ENCODE measurements at regions of chr3 and their contacts with region 1.

Region 1: GRCh38 chr3:35908366-35909232 is 269.3 kb downstream of the ARPP21 start:
- DNase-seq: peak; percentile 9
- ATAC-seq: peak; percentile 90
- H3K4me3 ChIP-seq: no peak overlapping the region
- H3K27ac ChIP-seq: no peak overlapping the region
- H3K4me1 ChIP-seq: no peaks in the 10 kb centered on the region
- H3K27me3 ChIP-seq: no peaks in the 10 kb centered on the region
- CTCF ChIP-seq: peak; percentile 58 to 67 (median 60)
- EP300 ChIP-seq: no peak
- POLR2A ChIP-seq: no peak
- RAD21 ChIP-seq: peak; percentile 69

Region 2: DNA sequence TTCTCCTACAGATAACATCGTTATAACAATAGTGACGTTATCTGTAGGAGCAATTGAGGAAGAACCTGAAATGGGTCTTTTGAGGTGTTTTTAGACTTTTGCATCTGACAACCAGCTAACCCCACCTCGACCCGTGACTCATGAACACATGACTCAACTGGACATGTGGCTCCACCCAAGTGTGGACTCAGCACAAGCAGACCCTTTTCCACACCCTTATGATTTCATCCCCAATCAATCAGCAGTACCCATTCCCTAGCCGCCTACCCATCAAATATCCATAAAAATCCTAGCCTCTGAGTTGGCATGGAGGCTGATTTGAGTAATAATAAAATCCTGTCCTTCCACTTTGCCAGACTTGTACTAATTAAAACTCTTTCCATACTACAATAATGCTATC is 13.9 kb before region 1 on chr3:
- CTCF ChIA-PET with region 1: interaction called, 17 read pairs
- POLR2A ChIA-PET with region 1: no interaction called
- RAD21 ChIA-PET with region 1: interaction called, 3 read pairs
- SMC1A ChIA-PET with region 1: interaction called, 7 read pairs
- in situ Hi-C with region 1: no loop called
- intact Hi-C with region 1: no loop called
- DNase-seq: no peak
- ATAC-seq: no peak
- H3K4me3 ChIP-seq: no peak overlapping the region
- H3K27ac ChIP-seq: no peak overlapping the region
- H3K4me1 ChIP-seq: no peaks in the 10 kb centered on the region
- H3K27me3 ChIP-seq: no peaks in the 10 kb centered on the region
- CTCF ChIP-seq: no peak
- EP300 ChIP-seq: no peak
- POLR2A ChIP-seq: no peak
- RAD21 ChIP-seq: no peak

Region 3: GRCh38 chr3:35921706-35922105 is 13.1 kb after region 1 on chr3:
- CTCF ChIA-PET with region 1: interaction called, 16 read pairs
- POLR2A ChIA-PET with region 1: no interaction called
- RAD21 ChIA-PET with region 1: interaction called, 8 read pairs
- SMC1A ChIA-PET with region 1: interaction called, 10 read pairs
- in situ Hi-C with region 1: no loop called
- intact Hi-C with region 1: no loop called
- DNase-seq: no peak
- ATAC-seq: peak; percentile 38; the same call in 2 of the 3 replicates
- H3K4me3 ChIP-seq: no peak overlapping the region
- H3K27ac ChIP-seq: no peak overlapping the region
- H3K4me1 ChIP-seq: no peaks in the 10 kb centered on the region
- H3K27me3 ChIP-seq: no peaks in the 10 kb centered on the region
- CTCF ChIP-seq: no peak
- EP300 ChIP-seq: no peak
- POLR2A ChIP-seq: no peak
- RAD21 ChIP-seq: no peak

Region 4: GRCh38 chr3:35929158-35929557 is 20.6 kb after region 1 on chr3:
- CTCF ChIA-PET with region 1: interaction called, 16 read pairs
- POLR2A ChIA-PET with region 1: no interaction called
- RAD21 ChIA-PET with region 1: interaction called, 8 read pairs
- SMC1A ChIA-PET with region 1: interaction called, 3 read pairs
- in situ Hi-C with region 1: no loop called
- intact Hi-C with region 1: no loop called
- DNase-seq: no peak
- ATAC-seq: no peak
- H3K4me3 ChIP-seq: no peak overlapping the region
- H3K27ac ChIP-seq: no peak overlapping the region
- H3K4me1 ChIP-seq: no peaks in the 10 kb centered on the region
- H3K27me3 ChIP-seq: no peaks in the 10 kb centered on the region
- CTCF ChIP-seq: no peak
- EP300 ChIP-seq: no peak
- POLR2A ChIP-seq: no peak
- RAD21 ChIP-seq: no peak